ENCODE measurements at regions of chr6 and their contacts with region 1.

Region 1: DNA sequence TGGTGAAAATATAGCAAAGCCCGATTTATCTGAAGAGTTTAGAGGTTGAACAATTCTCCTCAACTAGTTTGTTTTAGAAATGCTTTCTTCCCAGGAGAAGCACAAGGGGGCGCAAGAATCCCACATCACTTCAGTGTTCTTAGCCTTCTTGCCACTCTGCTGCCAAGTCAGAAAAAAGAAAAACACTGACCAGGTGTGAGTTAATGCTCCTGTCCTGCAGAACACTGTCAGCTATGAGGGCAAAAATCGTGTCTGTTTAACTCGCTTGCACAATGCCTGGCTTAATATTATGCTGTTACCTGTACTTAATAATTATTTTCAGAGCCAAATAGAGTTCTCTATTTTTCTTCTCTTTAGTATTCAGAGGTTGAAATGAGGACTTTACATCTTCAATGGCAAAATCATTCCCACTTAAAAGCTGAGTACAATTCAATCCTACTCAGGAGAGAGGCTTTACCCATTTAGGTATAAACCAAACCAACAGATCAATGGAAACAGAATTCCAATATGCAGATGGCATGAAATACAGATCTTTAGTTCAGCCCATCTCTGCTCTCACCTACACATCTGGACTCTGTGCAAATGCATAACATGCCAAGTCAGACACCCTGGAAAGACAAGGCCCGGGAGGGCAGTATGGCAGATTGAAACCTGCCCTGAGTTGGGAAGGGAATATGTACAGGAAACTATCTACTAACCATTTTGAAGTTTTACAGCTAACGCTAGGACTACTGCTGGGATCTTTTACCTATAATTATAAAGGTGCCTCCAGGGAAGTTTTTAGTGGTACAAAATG is 71.4 kb upstream of the TULP1 start:
- DNase-seq: peak; percentile 68
- ATAC-seq: peak; percentile 84
- H3K4me3 ChIP-seq: no peak overlapping the region
- H3K27ac ChIP-seq: peak overlapping the region; percentile 30; the same call in 1 of the 2 replicates
- H3K4me1 ChIP-seq: peaks cover 10 to 16% of the 10 kb centered on the region in 2 experiments
- H3K27me3 ChIP-seq: no peaks in the 10 kb centered on the region
- CTCF ChIP-seq: peak; percentile 83 to 94 (median 91)
- POLR2A ChIP-seq: no peak
- RAD21 ChIP-seq: peak; percentile 98

Region 2: GRCh38 chr6:35624341-35625070 is 40.4 kb after region 1 on chr6:
- CTCF ChIA-PET with region 1: interaction called, 10 read pairs
- POLR2A ChIA-PET with region 1: no interaction called
- RAD21 ChIA-PET with region 1: no interaction called
- intact Hi-C with region 1: loop called (anchors 1 kb)
- DNase-seq: no peak
- ATAC-seq: peak; percentile 70; the same call in 1 of the 2 replicates
- H3K4me3 ChIP-seq: no peak overlapping the region
- H3K27ac ChIP-seq: no peak overlapping the region
- H3K4me1 ChIP-seq: peaks cover 4% of the 10 kb centered on the region in 2 experiments; a peak in 1 of 4 replicates
- H3K27me3 ChIP-seq: no peaks in the 10 kb centered on the region
- CTCF ChIP-seq: peak; percentile 42 to 46 (median 43); a peak in 5 of 6 replicates
- POLR2A ChIP-seq: no peak
- RAD21 ChIP-seq: peak; percentile 58

Region 3: GRCh38 chr6:35688581-35689322 is 104.7 kb after region 1 on chr6 and contains the start of gene FKBP5:
- CTCF ChIA-PET with region 1: no interaction called
- POLR2A ChIA-PET with region 1: no interaction called
- RAD21 ChIA-PET with region 1: no interaction called
- intact Hi-C with region 1: loop called (anchors 1 kb)
- DNase-seq: peak; percentile 70
- ATAC-seq: peak; percentile 95
- H3K4me3 ChIP-seq: peak within 1 kb of the TSS; percentile 76 to 87
- H3K27ac ChIP-seq: peak within 1 kb of the TSS; percentile 90
- H3K4me1 ChIP-seq: peaks cover 12 to 14% of the 10 kb centered on the region in 2 experiments; a peak in 3 of 4 replicates
- H3K27me3 ChIP-seq: no peaks in the 10 kb centered on the region
- CTCF ChIP-seq: no peak
- POLR2A ChIP-seq: peak; percentile 85
- RAD21 ChIP-seq: no peak
- total RNA-seq, gene FKBP5: 50.3 TPM

Region 4: DNA sequence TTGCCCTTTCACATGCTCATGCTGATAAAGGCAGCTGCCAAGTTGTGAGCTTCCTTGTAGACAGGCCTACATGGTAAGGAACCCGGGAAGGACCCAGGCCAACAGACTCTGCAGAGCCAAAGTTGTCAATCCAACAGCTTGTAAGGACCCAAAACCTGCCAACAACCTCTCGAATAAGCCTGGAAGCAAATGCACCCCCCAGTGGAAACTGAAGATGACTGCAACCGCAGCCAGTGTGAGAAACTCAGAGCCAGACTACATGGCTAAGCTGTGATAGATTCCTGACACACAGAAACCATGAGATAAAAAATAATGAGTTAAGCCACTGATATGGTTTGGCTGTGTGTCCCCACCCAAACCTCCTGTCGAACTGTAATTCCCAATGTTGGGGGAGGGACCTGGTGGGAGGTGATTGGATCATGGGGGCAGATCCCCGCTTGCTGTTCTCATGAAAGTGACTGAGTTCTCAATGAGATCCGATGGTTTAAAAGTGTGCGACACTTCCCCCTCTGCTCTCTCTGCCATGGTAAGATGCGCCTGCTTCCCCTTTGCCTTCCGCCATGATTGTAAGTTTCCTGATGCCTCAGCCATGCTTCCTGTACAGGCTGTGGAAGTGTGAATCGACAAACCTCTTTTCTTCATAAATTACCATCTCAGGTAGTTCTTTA is 173.5 kb after region 1 on chr6:
- CTCF ChIA-PET with region 1: interaction called, 9 read pairs
- POLR2A ChIA-PET with region 1: no interaction called
- RAD21 ChIA-PET with region 1: no interaction called
- intact Hi-C with region 1: loop called (anchors 5 kb)
- DNase-seq: peak; percentile 71
- ATAC-seq: peak; percentile 94
- H3K4me3 ChIP-seq: no peak overlapping the region
- H3K27ac ChIP-seq: no peak overlapping the region
- H3K4me1 ChIP-seq: peaks cover 0 to 13% of the 10 kb centered on the region in 2 experiments; a peak in 1 of 4 replicates
- H3K27me3 ChIP-seq: no peaks in the 10 kb centered on the region
- CTCF ChIP-seq: peak; percentile 49 to 86 (median 79); a peak in 5 of 6 replicates
- POLR2A ChIP-seq: no peak
- RAD21 ChIP-seq: peak; percentile 65

Region 5: DNA sequence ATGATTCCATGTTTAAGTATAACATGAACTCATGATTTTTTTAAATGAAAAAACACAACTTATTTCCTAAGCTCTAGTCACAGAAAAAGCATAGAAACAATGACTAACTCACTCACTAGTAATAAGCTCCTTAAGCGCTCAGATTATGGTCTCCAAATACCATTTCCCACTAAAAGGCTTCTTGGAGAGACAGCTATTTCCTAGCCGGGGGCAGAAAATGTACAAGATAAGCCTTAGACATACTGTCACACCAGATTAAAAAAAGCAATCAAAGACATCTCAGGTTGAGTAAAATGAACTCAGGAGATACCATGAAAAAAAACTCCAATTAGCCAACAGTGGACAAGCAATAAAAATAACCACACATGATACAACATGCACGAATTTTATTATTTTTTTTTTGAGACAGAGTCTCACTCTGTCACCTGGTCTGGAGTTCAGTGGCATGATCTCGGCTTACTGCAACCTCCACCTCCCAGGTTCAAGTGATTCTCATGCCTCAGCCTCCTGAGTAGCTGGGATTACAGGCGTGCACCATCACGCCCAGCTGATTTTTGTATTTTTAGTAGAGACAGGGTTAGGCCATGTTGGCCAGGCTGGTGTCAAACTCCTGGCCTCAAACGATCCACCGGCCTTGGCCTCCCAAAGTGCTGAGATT is 321.9 kb after region 1 on chr6:
- CTCF ChIA-PET with region 1: no interaction called
- POLR2A ChIA-PET with region 1: no interaction called
- RAD21 ChIA-PET with region 1: no interaction called
- intact Hi-C with region 1: no loop called
- DNase-seq: no peak
- ATAC-seq: no peak
- H3K4me3 ChIP-seq: no peak overlapping the region
- H3K27ac ChIP-seq: no peak overlapping the region
- H3K4me1 ChIP-seq: no peaks in the 10 kb centered on the region
- H3K27me3 ChIP-seq: no peaks in the 10 kb centered on the region
- CTCF ChIP-seq: no peak
- POLR2A ChIP-seq: no peak
- RAD21 ChIP-seq: no peak

Region 6: GRCh38 chr6:35955976-35956375 is 371.9 kb after region 1 on chr6:
- CTCF ChIA-PET with region 1: no interaction called
- POLR2A ChIA-PET with region 1: no interaction called
- RAD21 ChIA-PET with region 1: no interaction called
- intact Hi-C with region 1: loop called (anchors 5 kb)
- DNase-seq: no peak
- ATAC-seq: peak; percentile 64
- H3K4me3 ChIP-seq: no peak overlapping the region
- H3K27ac ChIP-seq: no peak overlapping the region
- H3K4me1 ChIP-seq: peaks cover 0 to 21% of the 10 kb centered on the region in 2 experiments; a peak in 1 of 4 replicates
- H3K27me3 ChIP-seq: peaks cover 9% of the 10 kb centered on the region
- CTCF ChIP-seq: peak; percentile 38 to 55 (median 41); a peak in 5 of 6 replicates
- POLR2A ChIP-seq: no peak
- RAD21 ChIP-seq: peak; percentile 80

Region 7: GRCh38 chr6:36094753-36095496 is 510.8 kb after region 1 on chr6:
- CTCF ChIA-PET with region 1: no interaction called
- POLR2A ChIA-PET with region 1: no interaction called
- RAD21 ChIA-PET with region 1: no interaction called
- intact Hi-C with region 1: loop called (anchors 5 kb)
- DNase-seq: peak; percentile 47
- ATAC-seq: peak; percentile 99
- H3K4me3 ChIP-seq: no peak overlapping the region
- H3K27ac ChIP-seq: no peak overlapping the region
- H3K4me1 ChIP-seq: no peaks in the 10 kb centered on the region
- H3K27me3 ChIP-seq: no peaks in the 10 kb centered on the region
- CTCF ChIP-seq: peak; percentile 77 to 95 (median 95)
- POLR2A ChIP-seq: no peak
- RAD21 ChIP-seq: peak; percentile 89